Colonic mucosa (tissue), 4 donors: ENCODE measurements at regions of chr19 and their contacts with region 1.

Region 1: DNA sequence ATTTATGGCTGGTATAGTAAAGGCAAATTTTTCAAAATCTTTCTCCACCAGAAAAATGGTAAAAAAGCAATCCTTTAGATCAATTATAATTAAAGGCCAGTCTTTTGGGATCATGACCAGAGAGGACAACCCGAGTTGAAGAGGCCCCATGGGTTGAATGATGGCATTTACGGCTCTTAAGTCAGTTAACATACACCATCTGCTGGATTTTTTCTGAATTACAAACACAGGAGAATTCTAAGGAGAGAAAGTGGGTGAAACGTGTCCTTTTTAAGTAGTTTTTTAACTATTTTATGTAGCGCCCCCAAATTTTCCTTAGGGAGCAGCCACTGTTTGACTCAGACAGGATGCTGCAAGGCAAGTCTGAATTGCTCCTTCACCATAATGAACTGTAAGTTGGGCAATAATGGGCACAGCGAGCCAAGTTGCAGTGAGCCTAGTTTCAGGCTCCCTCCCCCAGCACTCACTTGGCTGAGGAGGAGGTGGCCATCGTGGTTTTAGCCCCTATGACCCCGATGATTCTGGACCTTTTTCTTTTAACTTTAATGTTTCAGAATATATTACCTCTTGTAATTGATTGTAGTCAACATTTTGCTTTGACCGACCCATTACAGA is 13.6 kb upstream of the ZNF611 start:
- DNase-seq: no peak
- H3K4me3 ChIP-seq: no peak overlapping the region
- H3K27ac ChIP-seq: no peak overlapping the region
- H3K4me1 ChIP-seq: no peaks in the 10 kb centered on the region
- H3K27me3 ChIP-seq: no peaks in the 10 kb centered on the region
- CTCF ChIP-seq: no peak

Region 2: GRCh38 chr19:52248241-52248640 is 500.2 kb before region 1 on chr19:
- intact Hi-C with region 1: loop called (anchors 5 kb)
- DNase-seq: peak; percentile 62
- H3K4me3 ChIP-seq: no peak overlapping the region
- H3K27ac ChIP-seq: no peak overlapping the region
- H3K4me1 ChIP-seq: no peaks in the 10 kb centered on the region
- H3K27me3 ChIP-seq: no peaks in the 10 kb centered on the region
- CTCF ChIP-seq: peak; percentile 27